ENCODE measurements at regions of chr1 and their contacts with region 1.

Region 1: GRCh38 chr1:150578965-150579798 is at the start of gene MCL1:
- DNase-seq: peak; percentile 98
- H3K4me3 Mint-ChIP-seq: peak within 1 kb of the TSS; percentile 99
- H3K27ac Mint-ChIP-seq: peak within 1 kb of the TSS; percentile 99
- H3K4me1 Mint-ChIP-seq: peaks cover 35% of the 10 kb centered on the region
- H3K27me3 Mint-ChIP-seq: no peaks in the 10 kb centered on the region
- CTCF ChIP-seq: no peak
- total RNA-seq, gene MCL1: 497 and 624 TPM in 2 replicates

Region 2: DNA sequence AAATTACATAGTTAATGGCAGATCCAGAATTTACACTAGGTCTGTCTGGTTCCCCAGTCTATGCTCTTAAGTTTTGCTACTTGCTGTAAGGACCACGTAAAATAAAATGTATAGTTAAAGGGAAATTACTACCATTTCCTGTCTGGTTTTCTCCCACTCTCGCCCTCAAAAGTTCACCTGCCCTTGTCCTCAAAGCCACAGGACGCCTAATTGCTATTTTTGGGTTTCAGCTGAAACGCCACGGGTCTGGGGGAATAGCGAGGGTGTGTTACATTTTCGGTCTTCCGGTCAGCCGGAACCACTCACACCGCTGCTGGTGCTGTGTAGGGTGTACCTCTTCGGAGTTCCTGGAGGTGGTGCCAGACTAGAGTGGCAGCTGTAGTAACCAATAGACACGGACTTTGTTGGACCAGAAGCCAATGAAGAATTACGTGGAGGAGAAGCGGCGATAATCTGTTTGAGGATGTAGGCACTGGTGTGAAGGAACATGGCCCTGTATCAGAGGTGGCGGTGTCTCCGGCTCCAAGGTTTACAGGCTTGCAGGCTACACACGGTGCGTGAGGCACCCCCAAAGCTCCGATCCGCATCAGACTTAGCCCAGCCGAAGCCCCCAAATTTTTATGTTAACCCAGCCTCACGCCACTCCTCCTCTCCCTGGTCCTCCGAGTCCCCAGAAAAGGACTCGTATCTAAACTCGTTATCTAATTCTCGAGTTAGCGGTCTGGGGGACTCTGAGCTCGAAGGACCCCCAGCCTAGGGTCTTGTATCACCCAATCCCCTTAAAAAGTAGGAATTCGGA is 92.0 kb before region 1 on chr1 and contains the start of gene TARS2:
- CTCF ChIA-PET with region 1: no interaction called
- POLR2A ChIA-PET with region 1: interaction called, 19 read pairs
- intact Hi-C with region 1: no loop called
- DNase-seq: peak; percentile 100
- H3K4me3 Mint-ChIP-seq: peak within 1 kb of the TSS; percentile 99
- H3K27ac Mint-ChIP-seq: peak within 1 kb of the TSS; percentile 93
- H3K4me1 Mint-ChIP-seq: peaks cover 14% of the 10 kb centered on the region
- H3K27me3 Mint-ChIP-seq: no peaks in the 10 kb centered on the region
- CTCF ChIP-seq: no peak
- total RNA-seq, gene TARS2: 43.1 and 65.3 TPM in 2 replicates

Region 3: DNA sequence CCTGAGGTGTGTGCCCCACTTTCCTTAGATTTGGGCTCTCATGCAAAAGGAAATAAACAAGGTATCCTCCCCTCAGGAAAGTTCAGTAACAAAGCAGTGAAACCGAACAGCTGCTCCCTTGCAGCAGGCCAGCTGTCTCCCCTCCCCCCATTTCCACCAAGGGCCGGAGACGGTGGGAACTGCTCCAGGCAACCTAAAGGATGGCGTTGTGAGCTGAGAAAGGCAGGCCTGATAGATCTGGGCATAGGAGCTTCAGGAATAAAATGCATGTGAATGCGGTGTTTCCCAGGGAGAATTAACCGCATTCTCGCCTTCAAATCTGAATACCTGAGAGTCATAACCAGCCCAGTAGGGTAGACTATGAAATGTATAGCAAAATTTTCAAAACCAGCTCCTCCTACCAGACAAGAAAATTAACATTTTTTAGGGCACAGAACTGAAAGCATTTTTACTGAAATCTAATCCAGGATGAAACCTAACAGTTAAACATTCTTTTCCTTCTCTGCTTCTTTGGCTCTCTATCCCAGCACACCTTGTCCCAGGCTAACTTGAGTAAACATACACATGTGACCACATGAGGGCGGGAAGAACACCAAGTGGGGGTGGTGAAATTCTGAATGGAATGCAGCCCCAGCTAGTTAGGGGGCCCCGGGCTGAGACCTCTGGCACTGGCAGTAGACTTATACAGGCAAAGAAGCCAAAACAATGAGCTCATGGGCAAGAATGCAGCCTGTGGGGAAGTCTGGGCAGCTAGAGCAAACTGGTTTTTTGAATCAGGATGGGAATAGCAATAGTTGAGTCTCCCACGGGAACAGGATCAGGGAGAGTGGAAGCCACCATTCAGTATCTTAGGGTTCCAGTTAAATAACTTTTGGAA is 11.2 kb before region 1 on chr1:
- CTCF ChIA-PET with region 1: interaction called, 245 read pairs
- POLR2A ChIA-PET with region 1: interaction called, 1,801 read pairs
- intact Hi-C with region 1: no loop called
- DNase-seq: peak; percentile 100
- H3K4me3 Mint-ChIP-seq: peak overlapping the region; percentile 52
- H3K27ac Mint-ChIP-seq: peak overlapping the region; percentile 99
- H3K4me1 Mint-ChIP-seq: peaks cover 64% of the 10 kb centered on the region
- H3K27me3 Mint-ChIP-seq: no peaks in the 10 kb centered on the region
- CTCF ChIP-seq: peak; percentile 6

Region 4: GRCh38 chr1:150596095-150596892 is 17.1 kb after region 1 on chr1:
- CTCF ChIA-PET with region 1: interaction called, 4 read pairs
- POLR2A ChIA-PET with region 1: interaction called, 15 read pairs
- intact Hi-C with region 1: no loop called
- DNase-seq: no peak
- H3K4me3 Mint-ChIP-seq: no peak overlapping the region
- H3K27ac Mint-ChIP-seq: no peak overlapping the region
- H3K4me1 Mint-ChIP-seq: peaks cover 8% of the 10 kb centered on the region
- H3K27me3 Mint-ChIP-seq: no peaks in the 10 kb centered on the region
- CTCF ChIP-seq: no peak

Region 5: GRCh38 chr1:150606463-150607148 is 27.4 kb after region 1 on chr1:
- CTCF ChIA-PET with region 1: interaction called, 3 read pairs
- POLR2A ChIA-PET with region 1: interaction called, 1,125 read pairs
- intact Hi-C with region 1: loop called (anchors 2 kb)
- DNase-seq: no peak
- H3K4me3 Mint-ChIP-seq: no peak overlapping the region
- H3K27ac Mint-ChIP-seq: no peak overlapping the region
- H3K4me1 Mint-ChIP-seq: peaks cover 29% of the 10 kb centered on the region
- H3K27me3 Mint-ChIP-seq: no peaks in the 10 kb centered on the region
- CTCF ChIP-seq: no peak

Region 6: GRCh38 chr1:150613061-150613920 is 34.1 kb after region 1 on chr1:
- CTCF ChIA-PET with region 1: interaction called, 4 read pairs
- POLR2A ChIA-PET with region 1: interaction called, 1,125 read pairs
- intact Hi-C with region 1: loop called (anchors 2 kb)
- DNase-seq: peak; percentile 98
- H3K4me3 Mint-ChIP-seq: peak overlapping the region; percentile 55
- H3K27ac Mint-ChIP-seq: peak overlapping the region; percentile 84
- H3K4me1 Mint-ChIP-seq: peaks cover 55% of the 10 kb centered on the region
- H3K27me3 Mint-ChIP-seq: no peaks in the 10 kb centered on the region
- CTCF ChIP-seq: no peak

Region 7: DNA sequence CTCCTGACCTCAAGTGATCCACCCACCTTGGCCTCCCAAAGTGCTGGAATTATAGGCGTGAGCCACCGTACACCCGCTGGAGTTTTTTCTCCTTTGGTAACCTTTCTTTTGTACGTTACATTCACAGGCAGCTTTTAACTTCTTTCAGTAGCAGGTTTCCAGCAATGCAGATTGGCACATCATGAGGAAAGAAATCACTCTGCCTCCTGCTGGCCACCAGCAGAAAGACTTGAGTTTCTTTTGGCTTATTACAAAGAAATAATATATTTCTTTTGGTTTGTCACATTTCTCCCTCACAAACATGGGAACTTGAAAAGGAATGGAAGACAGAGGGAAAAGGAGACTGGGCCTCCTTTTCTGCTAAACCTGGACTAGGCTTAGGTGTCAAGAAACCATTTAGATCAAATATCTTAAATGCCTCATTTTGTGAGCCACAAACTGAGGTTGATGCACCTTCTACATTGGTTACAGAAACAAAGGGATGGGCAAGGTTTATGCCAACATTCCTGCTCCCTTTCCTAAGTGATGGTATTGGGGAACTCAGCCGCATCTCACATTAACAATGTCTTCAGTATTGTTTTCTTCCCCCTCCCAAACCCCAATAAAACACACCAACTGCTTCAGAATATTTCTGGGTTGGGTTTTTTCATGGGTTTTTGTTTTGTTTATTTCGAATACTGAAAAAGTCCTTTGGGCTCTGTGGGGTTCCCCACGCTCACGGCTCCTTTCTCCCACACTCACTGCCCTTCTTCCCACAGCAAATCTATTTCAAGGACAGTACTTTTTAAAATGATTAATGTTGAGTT is 42.5 kb after region 1 on chr1:
- CTCF ChIA-PET with region 1: interaction called, 10 read pairs
- POLR2A ChIA-PET with region 1: interaction called, 1,125 read pairs
- intact Hi-C with region 1: loop called (anchors 1 kb)
- DNase-seq: peak; percentile 79
- H3K4me3 Mint-ChIP-seq: no peak overlapping the region
- H3K27ac Mint-ChIP-seq: peak overlapping the region; percentile 33
- H3K4me1 Mint-ChIP-seq: peaks cover 62% of the 10 kb centered on the region
- H3K27me3 Mint-ChIP-seq: no peaks in the 10 kb centered on the region
- CTCF ChIP-seq: peak; percentile 83

Region 8: DNA sequence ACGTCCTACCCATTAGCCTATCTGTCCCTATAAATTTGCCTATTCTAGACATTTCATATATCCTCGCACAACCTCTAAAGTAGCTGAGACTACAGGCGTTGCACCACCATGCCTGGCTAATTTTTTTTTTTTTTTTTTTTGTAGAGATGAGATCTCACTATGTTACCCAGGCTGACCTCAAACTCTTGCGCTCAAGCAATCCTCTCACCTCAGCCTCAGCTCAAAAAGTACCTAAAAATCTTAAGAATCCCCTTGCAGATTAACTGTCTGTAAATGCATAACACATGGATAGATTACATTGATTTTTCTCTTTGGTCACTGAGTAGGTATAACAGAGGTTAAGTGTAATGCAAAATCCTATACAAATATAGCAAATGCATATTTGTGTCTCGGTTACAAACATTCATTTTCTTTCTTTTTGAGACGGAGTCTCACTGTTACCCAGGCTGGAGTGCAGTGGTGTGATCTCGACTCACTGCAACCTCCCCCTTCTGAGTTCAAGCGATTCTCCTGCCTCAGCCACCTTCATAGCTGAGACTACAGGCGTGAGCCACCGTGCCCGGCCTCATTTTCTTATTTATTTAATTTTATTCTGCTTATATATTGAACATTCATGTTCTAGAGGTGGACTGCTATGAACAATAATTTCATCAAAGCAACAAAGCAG is 139.2 kb after region 1 on chr1:
- CTCF ChIA-PET with region 1: no interaction called
- POLR2A ChIA-PET with region 1: no interaction called
- intact Hi-C with region 1: no loop called
- DNase-seq: no peak
- H3K4me3 Mint-ChIP-seq: no peak overlapping the region
- H3K27ac Mint-ChIP-seq: no peak overlapping the region
- H3K4me1 Mint-ChIP-seq: no peaks in the 10 kb centered on the region
- H3K27me3 Mint-ChIP-seq: no peaks in the 10 kb centered on the region
- CTCF ChIP-seq: no peak

Region 9: DNA sequence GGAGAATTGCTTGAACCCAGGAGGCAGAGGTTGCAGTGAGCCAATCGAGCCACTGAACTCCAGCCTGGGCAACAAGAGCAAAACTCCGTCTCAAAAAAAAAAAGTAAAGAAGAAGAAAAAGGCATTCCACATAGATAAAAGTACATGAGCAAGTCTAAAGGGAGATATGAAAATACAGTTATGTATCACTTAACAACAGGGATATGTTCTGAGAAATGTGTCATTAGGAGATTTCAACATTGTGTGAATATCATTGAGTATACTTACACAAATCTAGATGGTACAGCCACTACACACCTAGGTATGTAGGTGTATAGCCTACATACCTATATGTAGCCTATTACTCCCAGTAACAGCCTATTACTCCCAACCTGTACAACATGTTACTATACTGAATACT is 284.5 kb after region 1 on chr1:
- CTCF ChIA-PET with region 1: no interaction called
- POLR2A ChIA-PET with region 1: no interaction called
- intact Hi-C with region 1: no loop called
- DNase-seq: no peak
- H3K4me3 Mint-ChIP-seq: no peak overlapping the region
- H3K27ac Mint-ChIP-seq: no peak overlapping the region
- H3K4me1 Mint-ChIP-seq: peaks cover 14% of the 10 kb centered on the region
- H3K27me3 Mint-ChIP-seq: no peaks in the 10 kb centered on the region
- CTCF ChIP-seq: no peak

Measured in MCF 10A (cell line).